GM12878 (cell line): ENCODE measurements at regions of chr9 and their contacts with region 1.

Region 1: DNA sequence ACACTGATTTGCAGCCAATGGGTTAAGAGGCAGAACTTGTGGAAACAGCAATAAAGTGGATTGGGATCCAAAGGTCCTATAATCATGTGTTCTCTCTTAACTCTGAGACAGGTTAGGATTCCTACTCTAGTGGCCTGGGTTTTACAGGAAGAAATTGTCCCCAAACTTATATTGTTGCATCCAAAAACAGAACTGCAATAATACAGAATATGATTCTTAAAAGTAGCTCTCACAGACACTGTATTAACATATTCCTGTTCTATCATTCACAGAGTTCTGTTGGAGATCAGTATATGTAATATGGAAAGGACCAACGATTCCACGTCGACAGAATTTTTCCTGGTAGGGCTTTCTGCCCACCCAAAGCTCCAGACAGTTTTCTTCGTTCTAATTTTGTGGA is at the start of gene OR13C8:
- DNase-seq: no peak
- ATAC-seq: no peak
- H3K4me3 ChIP-seq: no peak within 1 kb of the TSS
- H3K27ac ChIP-seq: no peak within 1 kb of the TSS
- H3K4me1 ChIP-seq: no peaks in the 10 kb centered on the region
- H3K27me3 ChIP-seq: no peaks in the 10 kb centered on the region
- CTCF ChIP-seq: no peak
- EP300 ChIP-seq: no peak
- POLR2A ChIP-seq: no peak
- RAD21 ChIP-seq: no peak
- polyA plus RNA-seq, gene OR13C8: not detected

Region 2: DNA sequence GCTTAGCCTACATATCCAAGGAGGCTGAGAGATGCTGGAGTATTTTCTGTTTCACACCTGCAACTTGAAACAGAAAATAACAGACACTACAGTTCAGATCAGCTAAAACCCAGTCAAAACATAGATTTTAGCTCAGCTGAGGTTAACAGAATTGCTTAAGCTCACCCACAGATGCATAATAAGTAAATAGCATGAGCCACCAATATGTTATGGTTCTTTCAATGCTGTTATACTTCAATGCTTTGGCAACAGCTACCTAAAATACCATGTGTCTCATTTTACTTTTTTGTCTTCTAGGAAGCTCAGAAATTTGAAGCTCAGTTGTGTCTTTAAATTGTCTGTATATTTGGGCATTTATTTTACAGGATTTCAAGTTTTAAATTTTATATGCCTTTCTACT is 100.6 kb before region 1 on chr9:
- CTCF ChIA-PET with region 1: no interaction called
- POLR2A ChIA-PET with region 1: no interaction called
- RAD21 ChIA-PET with region 1: no interaction called
- SMC1A ChIA-PET with region 1: no interaction called
- in situ Hi-C with region 1: no loop called
- intact Hi-C with region 1: no loop called
- DNase-seq: no peak
- ATAC-seq: no peak
- H3K4me3 ChIP-seq: no peak overlapping the region
- H3K27ac ChIP-seq: no peak overlapping the region
- H3K4me1 ChIP-seq: no peaks in the 10 kb centered on the region
- H3K27me3 ChIP-seq: no peaks in the 10 kb centered on the region
- CTCF ChIP-seq: no peak
- EP300 ChIP-seq: no peak
- POLR2A ChIP-seq: no peak
- RAD21 ChIP-seq: no peak

Region 3: GRCh38 chr9:104506565-104506964 is 62.3 kb before region 1 on chr9:
- CTCF ChIA-PET with region 1: no interaction called
- POLR2A ChIA-PET with region 1: no interaction called
- RAD21 ChIA-PET with region 1: no interaction called
- SMC1A ChIA-PET with region 1: no interaction called
- in situ Hi-C with region 1: no loop called
- intact Hi-C with region 1: loop called (anchors 5 kb)
- DNase-seq: no peak
- ATAC-seq: no peak
- H3K4me3 ChIP-seq: no peak overlapping the region
- H3K27ac ChIP-seq: no peak overlapping the region
- H3K4me1 ChIP-seq: no peaks in the 10 kb centered on the region
- H3K27me3 ChIP-seq: no peaks in the 10 kb centered on the region
- CTCF ChIP-seq: no peak
- EP300 ChIP-seq: no peak
- POLR2A ChIP-seq: no peak
- RAD21 ChIP-seq: no peak